Activated T-helper 1 cell treated with anti-CD3 and anti-CD28 coated beads, Interleukin-12 subunit alpha, Interleukin-12 subunit beta, Interleukin-2, Interleukin-4 antibody, amounts not matched to agents 30 ng/mL and 10 ng/mL and 1 ng/mL, durations not matched to agents 14 hours and 24 hours and 36 hours (primary cell): ENCODE measurements at regions of chr11 and their contacts with region 1.

Region 1: GRCh38 chr11:115893694-115894099 is 389.5 kb upstream of the CADM1 start:
- DNase-seq: no peak
- H3K4me3 Mint-ChIP-seq: no peak overlapping the region
- H3K27ac Mint-ChIP-seq: no peak overlapping the region
- H3K4me1 Mint-ChIP-seq: no peaks in the 10 kb centered on the region
- H3K27me3 Mint-ChIP-seq: no peaks in the 10 kb centered on the region

Region 2: DNA sequence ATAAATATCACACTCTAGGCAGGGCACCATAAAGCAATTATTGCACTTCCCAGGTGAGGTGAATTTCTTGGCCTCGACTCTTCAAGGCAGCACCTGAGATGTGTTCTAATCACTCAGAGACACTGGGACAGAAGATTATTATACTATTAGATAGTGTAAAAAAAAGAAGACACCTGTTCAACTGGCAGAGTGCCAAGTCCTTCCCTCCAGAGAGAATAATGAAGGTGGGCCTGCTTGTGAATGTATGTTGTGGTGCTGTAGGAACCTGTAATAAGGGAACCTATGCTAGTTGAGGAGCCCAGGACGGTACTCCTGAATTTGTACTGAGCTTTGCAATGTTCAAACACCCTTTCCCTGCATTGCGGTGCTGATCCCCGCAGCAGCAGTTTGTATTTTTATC is 1107.9 kb before region 1 on chr11:
- intact Hi-C with region 1: loop called (anchors 10 kb)
- DNase-seq: no peak
- H3K4me3 Mint-ChIP-seq: no peak overlapping the region
- H3K27ac Mint-ChIP-seq: no peak overlapping the region
- H3K4me1 Mint-ChIP-seq: no peaks in the 10 kb centered on the region
- H3K27me3 Mint-ChIP-seq: peaks cover 4% of the 10 kb centered on the region

Region 3: DNA sequence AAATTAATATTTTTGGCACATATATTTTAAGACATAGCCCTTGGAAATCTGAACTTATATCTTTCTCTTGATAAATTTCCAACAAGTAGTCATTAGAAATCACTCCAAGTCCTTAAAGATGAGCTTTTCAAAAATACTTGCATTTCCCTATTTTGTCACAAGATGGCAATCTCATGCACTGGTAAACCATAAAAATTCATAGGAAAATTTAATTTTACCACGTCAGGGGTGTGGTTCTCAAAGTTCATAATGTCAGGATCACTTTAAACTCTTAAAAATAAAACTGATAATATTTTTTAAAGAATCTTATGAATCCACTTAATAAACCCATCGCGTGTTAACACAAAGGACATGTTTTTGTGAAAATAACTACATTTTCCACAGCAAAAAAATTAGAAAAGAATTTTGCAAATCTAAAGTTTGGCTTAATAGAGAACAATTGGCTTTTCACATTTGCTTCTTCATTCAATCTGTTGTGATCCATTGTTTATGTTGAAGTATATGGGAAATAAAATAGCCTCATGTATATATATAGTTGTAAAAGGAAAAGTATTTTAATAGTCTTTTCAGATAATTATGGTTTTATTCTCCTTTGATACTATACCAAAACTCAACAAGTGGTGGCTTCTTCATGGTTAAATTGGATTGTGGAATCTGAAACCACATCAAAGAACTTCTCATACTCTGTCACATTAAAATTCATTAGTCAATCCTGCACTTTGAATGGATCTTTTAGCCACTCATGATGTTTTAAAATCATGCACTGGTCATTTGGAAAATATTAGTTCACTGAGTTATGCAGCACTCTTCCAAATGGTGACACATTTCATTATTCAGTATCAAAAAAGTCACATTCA is 558.5 kb before region 1 on chr11:
- intact Hi-C with region 1: no loop called
- DNase-seq: no peak
- H3K4me3 Mint-ChIP-seq: no peak overlapping the region
- H3K27ac Mint-ChIP-seq: no peak overlapping the region
- H3K4me1 Mint-ChIP-seq: no peaks in the 10 kb centered on the region
- H3K27me3 Mint-ChIP-seq: no peaks in the 10 kb centered on the region

Region 4: DNA sequence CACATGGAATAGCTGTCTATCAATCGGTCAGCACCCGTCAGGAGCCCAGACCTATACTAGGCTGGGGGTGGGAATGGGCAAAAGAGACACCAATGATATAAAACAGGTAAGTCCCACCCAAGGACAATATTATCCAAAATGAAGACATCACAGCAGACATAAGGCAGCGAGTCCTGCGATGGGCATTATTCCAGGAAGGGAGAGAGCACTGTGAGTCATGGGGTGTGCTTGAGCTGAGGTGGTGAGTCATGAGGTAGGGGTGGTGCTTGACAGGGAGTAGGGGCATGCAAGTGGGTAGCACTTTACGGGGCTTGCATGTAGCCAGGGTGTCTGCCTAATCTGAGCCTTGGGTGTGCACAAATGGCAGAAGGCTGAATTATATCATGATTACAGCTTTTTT is 215.5 kb after region 1 on chr11:
- intact Hi-C with region 1: no loop called
- DNase-seq: no peak
- H3K4me3 Mint-ChIP-seq: no peak overlapping the region
- H3K27ac Mint-ChIP-seq: no peak overlapping the region
- H3K4me1 Mint-ChIP-seq: no peaks in the 10 kb centered on the region
- H3K27me3 Mint-ChIP-seq: no peaks in the 10 kb centered on the region